ENCODE measurements at regions of chr10 and their contacts with region 1.

Region 1: GRCh38 chr10:7561216-7561893 is 105.4 kb downstream of the ITIH5 start:
- DNase-seq: no peak
- H3K4me3 Mint-ChIP-seq: no peak overlapping the region
- H3K27ac Mint-ChIP-seq: no peak overlapping the region
- H3K4me1 Mint-ChIP-seq: no peaks in the 10 kb centered on the region
- H3K27me3 Mint-ChIP-seq: peaks cover 2% of the 10 kb centered on the region

Region 2: DNA sequence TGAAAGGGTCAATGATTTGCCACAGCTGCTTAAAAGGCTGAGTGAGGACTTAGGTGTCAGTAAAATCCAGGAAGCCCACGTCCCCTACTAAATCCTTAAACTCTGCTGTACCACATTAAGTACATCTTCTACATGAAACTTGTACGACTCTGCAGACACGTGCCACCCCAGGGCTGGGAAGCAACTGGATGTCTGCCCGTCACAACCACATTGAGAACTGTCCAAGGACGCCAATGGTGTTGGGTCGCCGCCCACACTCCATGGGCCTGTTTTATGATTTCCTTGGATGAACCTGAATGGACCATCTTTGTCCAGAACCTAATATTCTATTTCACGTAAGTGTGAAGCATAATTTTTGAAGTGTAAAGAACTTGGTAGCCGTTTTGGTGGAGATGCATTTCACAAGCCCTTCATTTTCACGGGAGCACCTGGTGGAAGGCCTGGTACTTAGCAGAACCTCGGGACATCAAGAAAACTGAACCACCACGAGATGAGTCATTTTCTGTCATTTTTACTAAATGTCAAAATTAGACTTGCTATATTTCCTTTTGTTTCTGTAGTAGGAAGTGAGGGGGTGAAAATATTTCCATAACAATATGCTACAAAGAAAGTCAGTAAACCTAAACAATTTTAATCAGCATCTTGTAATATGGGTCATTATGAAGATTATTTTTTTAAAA is 285.5 kb before region 1 on chr10:
- intact Hi-C with region 1: no loop called
- DNase-seq: no peak
- H3K4me3 Mint-ChIP-seq: no peak overlapping the region
- H3K27ac Mint-ChIP-seq: peak overlapping the region; percentile 83
- H3K4me1 Mint-ChIP-seq: peaks cover 57% of the 10 kb centered on the region
- H3K27me3 Mint-ChIP-seq: no peaks in the 10 kb centered on the region

Region 3: GRCh38 chr10:8278099-8278498 is 716.7 kb after region 1 on chr10:
- intact Hi-C with region 1: loop called (anchors 5 kb)
- DNase-seq: no peak
- H3K4me3 Mint-ChIP-seq: no peak overlapping the region
- H3K27ac Mint-ChIP-seq: peak overlapping the region; percentile 31
- H3K4me1 Mint-ChIP-seq: peaks cover 12% of the 10 kb centered on the region
- H3K27me3 Mint-ChIP-seq: peaks cover 18% of the 10 kb centered on the region